ENCODE measurements at regions of chr6 and their contacts with region 1.

Region 1: GRCh38 chr6:26097268-26097875 is 10.1 kb downstream of the HFE start:
- DNase-seq: peak in 1 of 2 donors; percentile 42
- ATAC-seq: peak; percentile 69 to 94 (median 84)
- H3K4me3 ChIP-seq: no peak overlapping the region
- H3K27ac ChIP-seq: no peak overlapping the region
- H3K4me1 ChIP-seq: no peaks in the 10 kb centered on the region
- H3K27me3 ChIP-seq: no peaks in the 10 kb centered on the region
- CTCF ChIP-seq: peak; percentile 82

Region 2: DNA sequence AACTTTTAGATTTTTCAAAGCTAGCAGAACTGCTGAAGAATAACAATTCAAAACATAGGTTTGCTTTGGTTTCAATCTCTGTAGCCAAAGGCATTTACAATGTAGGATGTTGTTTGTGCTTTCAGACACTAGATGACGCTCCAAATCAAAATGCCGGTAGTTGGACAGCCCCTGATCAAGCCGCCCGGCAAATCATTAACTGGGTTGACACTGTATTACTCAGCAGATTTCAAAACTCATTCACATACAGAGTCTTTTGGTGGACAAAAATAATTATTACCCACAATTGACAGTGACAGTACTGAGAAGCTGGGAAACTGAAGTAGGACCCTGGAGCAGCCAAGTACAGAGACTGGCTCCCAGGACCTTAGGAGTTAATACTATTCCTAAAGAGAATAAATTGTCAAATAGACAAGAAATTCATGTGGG is 31.4 kb before region 1 on chr6:
- intact Hi-C with region 1: loop called (anchors 1 kb)
- DNase-seq: peak in 1 of 2 donors; percentile 45
- ATAC-seq: peak; percentile 80 to 98 (median 92)
- H3K4me3 ChIP-seq: no peak overlapping the region
- H3K27ac ChIP-seq: peak overlapping the region; percentile 40
- H3K4me1 ChIP-seq: no peaks in the 10 kb centered on the region
- H3K27me3 ChIP-seq: no peaks in the 10 kb centered on the region
- CTCF ChIP-seq: peak; percentile 74